Natural killer cell (primary cell): ENCODE measurements at regions of chr1 and their contacts with region 1.

Region 1: GRCh38 chr1:175319418-175320230 is 127.0 kb upstream of the KIAA0040 start:
- DNase-seq: peak; percentile 57 to 88
- ATAC-seq: peak; percentile 84 to 95 (median 93)
- H3K4me3 ChIP-seq: no peak overlapping the region
- H3K4me3 Mint-ChIP-seq: no peak overlapping the region
- H3K27ac ChIP-seq: no peak overlapping the region
- H3K27ac Mint-ChIP-seq: no peak overlapping the region
- H3K4me1 ChIP-seq: no peaks in the 10 kb centered on the region
- H3K4me1 Mint-ChIP-seq: peaks cover 0 to 7% of the 10 kb centered on the region in 2 donors
- H3K27me3 ChIP-seq: no peaks in the 10 kb centered on the region
- H3K27me3 Mint-ChIP-seq: no peaks in the 10 kb centered on the region
- CTCF ChIP-seq: peak; percentile 81

Region 2: GRCh38 chr1:175023043-175023921 is 296.3 kb before region 1 on chr1 and contains the start of gene MRPS14:
- intact Hi-C with region 1: loop called (anchors 2 kb)
- DNase-seq: peak; percentile 95 to 99
- ATAC-seq: peak; percentile 91 to 98 (median 94)
- H3K4me3 ChIP-seq: peak within 1 kb of the TSS; percentile 82
- H3K4me3 Mint-ChIP-seq: peak within 1 kb of the TSS; percentile 97
- H3K27ac ChIP-seq: peak within 1 kb of the TSS; percentile 88
- H3K27ac Mint-ChIP-seq: peak within 1 kb of the TSS; percentile 91 to 94
- H3K4me1 ChIP-seq: peaks cover 12% of the 10 kb centered on the region
- H3K4me1 Mint-ChIP-seq: peaks cover 25 to 27% of the 10 kb centered on the region in 2 donors
- H3K27me3 ChIP-seq: no peaks in the 10 kb centered on the region
- H3K27me3 Mint-ChIP-seq: no peaks in the 10 kb centered on the region
- CTCF ChIP-seq: no peak
- total RNA-seq, gene MRPS14: 11.5 to 13.2 (median 12.0) TPM

Region 3: GRCh38 chr1:175471039-175471800 is 151.6 kb after region 1 on chr1:
- intact Hi-C with region 1: no loop called
- DNase-seq: no peak
- ATAC-seq: no peak
- H3K4me3 ChIP-seq: no peak overlapping the region
- H3K4me3 Mint-ChIP-seq: no peak overlapping the region
- H3K27ac ChIP-seq: no peak overlapping the region
- H3K27ac Mint-ChIP-seq: no peak overlapping the region
- H3K4me1 ChIP-seq: no peaks in the 10 kb centered on the region
- H3K4me1 Mint-ChIP-seq: no peaks in the 10 kb centered on the region
- H3K27me3 ChIP-seq: no peaks in the 10 kb centered on the region
- H3K27me3 Mint-ChIP-seq: peaks cover 18 to 34% of the 10 kb centered on the region in 2 donors
- CTCF ChIP-seq: no peak